Activated B cell treated with CpG ODN at 0.5 μM for 24 hours (primary cell): ENCODE measurements at regions of chr2 and their contacts with region 1.

Region 1: GRCh38 chr2:73926493-73927338 is at the start of gene DGUOK:
- DNase-seq: peak; percentile 88
- ATAC-seq: peak; percentile 95
- H3K4me3 Mint-ChIP-seq: peak within 1 kb of the TSS; percentile 92
- H3K27ac Mint-ChIP-seq: peak within 1 kb of the TSS; percentile 93
- H3K4me1 Mint-ChIP-seq: peaks cover 60% of the 10 kb centered on the region
- H3K27me3 Mint-ChIP-seq: no peaks in the 10 kb centered on the region
- CTCF ChIP-seq: no peak
- total RNA-seq, gene DGUOK: 70.1 and 77.4 TPM in 2 replicates

Region 2: DNA sequence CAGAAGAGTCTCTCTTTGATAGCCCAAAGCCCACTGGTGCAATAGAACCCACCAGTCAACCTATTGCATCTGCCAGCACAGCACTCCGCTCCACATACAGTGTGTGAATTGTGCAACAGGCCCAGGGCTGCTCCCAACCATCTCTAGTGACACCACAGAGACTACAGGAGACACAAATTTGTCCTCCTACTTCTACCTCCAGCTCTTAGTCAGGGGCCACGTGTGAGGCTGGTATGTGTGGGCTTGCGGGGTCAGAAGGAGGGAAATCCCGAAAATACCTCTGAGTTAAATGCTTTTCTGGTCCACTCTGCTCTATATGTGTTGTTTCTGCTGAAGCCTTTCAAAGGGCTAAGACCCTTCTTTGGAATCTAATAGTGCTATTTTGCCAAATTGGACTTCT is 18.0 kb after region 1 on chr2:
- CTCF ChIA-PET with region 1: no interaction called
- POLR2A ChIA-PET with region 1: interaction called, 11 read pairs
- intact Hi-C with region 1: no loop called
- DNase-seq: no peak
- ATAC-seq: no peak
- H3K4me3 Mint-ChIP-seq: no peak overlapping the region
- H3K27ac Mint-ChIP-seq: no peak overlapping the region
- H3K4me1 Mint-ChIP-seq: peaks cover 44% of the 10 kb centered on the region
- H3K27me3 Mint-ChIP-seq: no peaks in the 10 kb centered on the region
- CTCF ChIP-seq: no peak

Region 3: GRCh38 chr2:74002487-74003391 is 76.0 kb after region 1 on chr2:
- CTCF ChIA-PET with region 1: no interaction called
- POLR2A ChIA-PET with region 1: interaction called, 6 read pairs
- intact Hi-C with region 1: loop called (anchors 1 kb)
- DNase-seq: peak; percentile 78
- ATAC-seq: peak; percentile 91
- H3K4me3 Mint-ChIP-seq: peak overlapping the region; percentile 82
- H3K27ac Mint-ChIP-seq: peak overlapping the region; percentile 50
- H3K4me1 Mint-ChIP-seq: peaks cover 73% of the 10 kb centered on the region
- H3K27me3 Mint-ChIP-seq: no peaks in the 10 kb centered on the region
- CTCF ChIP-seq: no peak

Region 4: DNA sequence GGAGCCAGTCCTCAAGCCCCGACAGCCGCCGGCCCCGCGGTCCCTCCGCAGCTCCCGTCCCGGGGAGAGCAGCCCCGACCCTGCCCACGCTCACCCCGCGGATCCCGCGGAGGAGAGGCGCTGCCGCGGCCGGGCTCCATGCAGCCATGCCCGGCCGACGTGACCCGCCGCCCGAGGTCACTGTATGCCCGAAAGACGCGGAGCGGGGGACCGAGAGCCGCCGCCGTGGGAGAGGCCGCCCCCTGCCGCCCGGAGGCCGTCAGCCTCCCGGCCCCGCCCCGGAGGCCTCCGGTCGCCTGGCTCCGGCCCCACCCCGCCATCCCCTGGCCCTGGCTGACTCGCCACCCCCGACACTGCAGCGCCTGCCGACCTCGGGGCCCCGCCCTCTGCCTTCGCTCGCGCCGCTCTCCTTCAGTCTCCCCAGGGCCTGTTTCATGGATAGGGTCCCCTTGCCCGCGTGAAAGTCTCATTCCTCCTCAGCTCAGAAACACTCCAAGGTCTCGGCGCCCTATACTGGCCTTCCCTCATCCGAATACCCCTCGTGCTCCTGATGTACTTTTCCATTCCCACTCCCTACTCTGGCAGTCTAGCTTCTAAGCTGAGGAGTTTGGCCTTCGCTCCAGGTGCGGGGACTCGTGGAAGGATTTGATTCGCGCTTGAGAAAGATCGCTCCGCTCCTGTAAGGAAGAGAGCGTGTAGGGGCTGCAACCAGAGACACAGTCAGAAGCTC is 221.2 kb after region 1 on chr2 and contains the start of gene BOLA3:
- CTCF ChIA-PET with region 1: no interaction called
- POLR2A ChIA-PET with region 1: interaction called, 4 read pairs
- intact Hi-C with region 1: loop called (anchors 1 kb)
- DNase-seq: peak; percentile 86
- ATAC-seq: peak; percentile 97
- H3K4me3 Mint-ChIP-seq: no peak within 1 kb of the TSS
- H3K27ac Mint-ChIP-seq: no peak within 1 kb of the TSS
- H3K4me1 Mint-ChIP-seq: peaks cover 7% of the 10 kb centered on the region
- H3K27me3 Mint-ChIP-seq: no peaks in the 10 kb centered on the region
- CTCF ChIP-seq: no peak
- total RNA-seq, gene BOLA3: 18.8 and 19.1 TPM in 2 replicates

Region 5: GRCh38 chr2:74653985-74654882 is 727.5 kb after region 1 on chr2 and contains the start of gene SEMA4F:
- CTCF ChIA-PET with region 1: no interaction called
- POLR2A ChIA-PET with region 1: no interaction called
- intact Hi-C with region 1: loop called (anchors 10 kb)
- DNase-seq: peak; percentile 92
- ATAC-seq: peak; percentile 99
- H3K4me3 Mint-ChIP-seq: peak within 1 kb of the TSS; percentile 91
- H3K27ac Mint-ChIP-seq: peak within 1 kb of the TSS; percentile 82
- H3K4me1 Mint-ChIP-seq: peaks cover 16% of the 10 kb centered on the region
- H3K27me3 Mint-ChIP-seq: peaks cover 9% of the 10 kb centered on the region
- CTCF ChIP-seq: no peak
- total RNA-seq, gene SEMA4F: 10.2 and 11.6 TPM in 2 replicates